ENCODE measurements at regions of chr22 and their contacts with region 1.

Region 1: DNA sequence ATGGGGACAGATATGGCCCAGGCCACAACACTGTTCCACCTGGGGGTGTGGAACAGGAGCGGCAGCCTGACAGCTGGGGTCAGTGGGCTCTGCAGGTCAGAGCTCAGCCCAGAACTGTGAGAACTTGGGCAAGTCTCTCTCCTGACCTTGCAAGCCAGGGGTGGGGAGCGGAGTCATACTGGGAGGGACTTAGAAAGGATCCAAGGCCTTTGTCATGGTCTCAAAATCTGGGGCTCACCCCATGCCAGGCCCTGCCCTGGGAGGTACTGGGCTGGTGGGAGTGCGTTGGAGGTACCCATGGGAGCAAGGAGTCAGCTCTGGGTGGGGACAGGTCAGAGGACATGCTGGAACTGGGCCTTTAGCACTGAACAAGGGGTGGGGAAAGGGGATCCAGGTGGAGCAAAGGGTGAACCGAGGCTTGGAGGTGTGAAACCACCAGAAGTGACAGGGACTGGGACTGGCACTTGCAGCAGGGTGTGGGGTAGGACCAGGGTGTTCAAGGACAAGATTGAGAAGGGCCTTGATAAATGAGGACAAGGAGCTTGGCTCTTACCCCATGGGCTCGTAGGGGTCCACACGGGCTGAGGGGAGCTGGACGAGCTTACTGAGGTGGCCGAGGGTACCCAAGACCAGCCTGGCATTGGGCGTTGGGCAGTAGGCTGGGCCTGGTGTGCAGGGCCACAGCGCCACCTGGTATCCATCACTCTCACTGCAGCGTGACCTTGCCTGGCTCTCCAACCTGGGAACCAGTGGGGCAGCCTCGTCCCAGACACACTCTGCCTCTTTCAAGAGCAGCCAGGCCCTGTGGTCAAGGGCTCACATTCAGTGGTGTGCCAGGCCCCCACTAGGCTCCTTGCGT is 7.4 kb upstream of the PMM1 start:
- DNase-seq: peak; percentile 77
- ATAC-seq: peak; percentile 86

Region 2: DNA sequence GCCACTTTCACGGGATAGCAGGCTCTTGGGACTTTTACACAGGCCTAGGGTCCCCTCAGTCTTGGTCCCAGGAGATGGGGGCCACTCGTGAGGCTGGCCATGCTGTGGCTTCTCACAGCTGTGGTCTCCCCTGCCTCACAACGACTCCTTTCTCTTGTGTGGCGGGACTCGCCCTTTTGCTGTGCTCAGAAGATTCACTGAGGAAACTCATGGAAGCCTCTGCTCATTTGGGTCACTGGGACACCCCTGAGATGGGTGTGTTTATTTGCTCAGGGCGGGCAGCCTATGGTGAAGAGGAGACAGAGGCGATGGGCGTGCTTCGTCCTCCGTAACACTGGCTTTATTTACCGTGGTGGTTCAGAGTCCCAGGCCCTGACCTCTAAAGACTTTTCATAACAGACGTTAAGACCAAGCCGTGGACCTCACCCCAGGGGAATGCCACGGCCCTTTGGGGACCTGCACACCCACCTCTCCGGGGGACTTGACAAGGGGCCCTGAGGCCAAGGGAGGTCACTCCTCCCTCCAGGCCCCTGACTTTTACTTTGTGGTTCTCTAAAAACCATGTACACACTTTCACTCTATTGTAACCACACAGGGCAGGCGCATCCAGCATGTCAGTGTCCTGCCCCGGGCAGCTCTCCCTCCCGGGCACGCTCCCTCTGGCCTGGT is 199.7 kb before region 1 on chr22:
- intact Hi-C with region 1: loop called (anchors 5 kb)
- DNase-seq: no peak
- ATAC-seq: no peak

Region 3: DNA sequence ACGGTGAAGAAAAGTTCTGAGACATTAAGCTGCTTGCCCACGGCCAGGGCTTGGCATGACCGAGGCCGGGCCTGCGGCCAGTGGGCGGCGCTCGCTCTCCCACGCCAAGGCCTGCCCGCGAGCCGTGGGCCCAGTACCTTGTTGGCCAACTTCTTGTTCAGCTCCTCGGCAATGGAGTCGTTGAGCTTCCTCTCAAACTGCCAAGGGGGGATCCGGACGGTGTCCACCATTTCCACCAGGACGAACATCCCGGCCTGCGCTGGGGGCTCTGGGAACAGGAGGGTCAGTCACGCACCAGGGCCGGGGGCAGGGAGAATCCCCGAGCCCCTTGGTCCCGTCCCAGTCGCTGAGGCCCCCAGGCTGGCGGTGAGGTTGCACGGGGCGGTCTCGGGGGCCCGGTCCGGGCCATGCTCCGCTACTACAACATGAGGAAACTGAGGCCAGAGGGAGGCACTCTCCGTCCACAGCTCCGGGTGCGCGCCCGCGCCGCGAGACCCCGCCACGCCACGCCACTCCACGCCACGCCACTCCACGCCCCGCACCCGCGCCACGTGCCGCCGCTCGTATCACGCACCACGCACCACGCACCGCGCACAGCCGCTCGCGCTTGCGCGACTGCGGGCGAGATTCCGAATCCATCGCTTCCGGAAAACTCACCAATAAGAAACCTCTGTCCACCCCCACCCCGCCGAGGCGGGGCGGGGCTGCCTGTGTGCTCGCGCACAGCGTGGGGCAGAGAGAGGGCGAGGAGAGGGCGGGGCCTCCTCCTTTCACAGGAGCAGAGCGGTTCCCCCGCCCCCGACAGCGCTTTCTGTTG is 52.9 kb before region 1 on chr22 and contains the start of gene POLR3H:
- intact Hi-C with region 1: loop called (anchors 5 kb)
- DNase-seq: peak; percentile 100
- ATAC-seq: peak; percentile 99
- total RNA-seq, gene POLR3H: 20.1 TPM

Region 4: DNA sequence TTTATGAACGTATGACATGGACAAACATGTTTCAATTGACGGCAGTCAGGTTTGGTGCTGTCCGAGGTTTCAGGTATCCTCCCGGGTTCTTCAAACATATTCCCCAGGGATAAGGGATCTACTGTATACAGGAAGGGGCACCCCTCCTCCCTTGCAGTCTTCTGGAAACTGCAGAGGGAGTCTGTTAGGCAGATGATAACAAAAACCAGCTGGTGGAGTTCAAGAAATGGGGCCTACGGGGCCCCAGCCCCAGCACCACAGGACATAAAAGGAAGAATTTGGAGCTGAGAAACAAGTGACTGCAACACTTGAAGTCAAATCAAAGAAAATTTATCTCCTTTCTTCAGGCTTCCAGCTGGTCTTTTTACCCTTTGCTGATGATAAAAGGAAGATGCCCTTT is 59.6 kb after region 1 on chr22:
- intact Hi-C with region 1: no loop called
- DNase-seq: no peak
- ATAC-seq: no peak

Measured in Right ventricle myocardium inferior (tissue), 1 donor.